ENCODE measurements at regions of chr12 and their contacts with region 1.

Region 1: DNA sequence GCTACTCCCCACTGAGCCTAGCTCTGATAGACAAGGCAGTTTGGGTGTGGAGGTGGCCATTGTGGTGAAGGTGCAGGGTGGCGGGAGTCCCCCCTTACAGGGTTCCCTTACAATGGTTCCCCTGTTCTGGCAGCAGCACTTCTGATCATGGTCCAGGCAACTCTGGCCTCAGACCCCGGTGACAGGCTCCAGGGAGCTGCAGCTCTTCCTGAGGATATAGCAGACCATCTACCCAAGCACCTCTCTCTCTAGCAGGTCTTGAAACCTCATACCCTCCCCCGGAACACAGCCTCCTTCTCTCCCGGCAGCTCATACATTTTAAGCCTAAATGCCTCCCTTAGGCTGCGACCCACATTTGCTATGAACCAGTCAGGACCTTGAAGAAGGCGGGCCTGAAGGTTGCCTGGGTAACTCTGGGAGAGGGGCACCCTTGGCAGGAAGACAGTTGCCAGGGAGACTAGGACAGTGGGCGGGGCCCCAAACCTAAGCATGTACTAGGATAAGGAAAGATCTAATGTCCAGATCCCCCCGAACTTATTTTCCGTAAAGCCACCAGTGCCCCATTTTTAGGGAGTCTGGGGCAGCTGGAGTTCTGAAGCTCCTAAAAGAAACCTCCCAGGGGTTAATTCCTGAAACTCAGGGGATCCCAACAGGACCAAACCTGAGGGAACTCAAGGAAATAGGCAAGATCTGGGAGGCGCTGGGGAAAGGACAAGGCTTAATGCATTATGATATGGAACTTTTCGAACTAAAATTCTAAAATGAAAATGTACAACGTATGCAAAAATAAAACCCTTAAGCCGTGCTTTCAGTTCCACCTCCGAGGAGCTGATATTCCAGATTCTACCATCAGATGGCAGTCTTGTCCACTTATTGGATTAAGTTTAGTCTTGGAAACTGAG is 4.5 kb upstream of the GDF11 start:
- DNase-seq: peak; percentile 82
- ATAC-seq: peak; percentile 79
- H3K4me3 ChIP-seq: peak overlapping the region; percentile 63 to 64
- H3K27ac ChIP-seq: peak overlapping the region; percentile 46
- H3K4me1 ChIP-seq: peaks cover 14 to 44% of the 10 kb centered on the region in 2 experiments
- H3K27me3 ChIP-seq: no peaks in the 10 kb centered on the region
- CTCF ChIP-seq: peak; percentile 65 to 93 (median 87)
- POLR2A ChIP-seq: peak; percentile 37
- RAD21 ChIP-seq: peak; percentile 95

Region 2: GRCh38 chr12:55659486-55660385 is 78.6 kb before region 1 on chr12:
- CTCF ChIA-PET with region 1: interaction called, 40 read pairs
- POLR2A ChIA-PET with region 1: no interaction called
- RAD21 ChIA-PET with region 1: interaction called, 3 to 4 read pairs
- intact Hi-C with region 1: loop called (anchors 1 kb)
- DNase-seq: no peak
- ATAC-seq: peak; percentile 65; the same call in 1 of the 2 replicates
- H3K4me3 ChIP-seq: no peak overlapping the region
- H3K27ac ChIP-seq: no peak overlapping the region
- H3K4me1 ChIP-seq: no peaks in the 10 kb centered on the region
- H3K27me3 ChIP-seq: no peaks in the 10 kb centered on the region
- CTCF ChIP-seq: peak; percentile 62 to 74 (median 64); a peak in 5 of 6 replicates
- POLR2A ChIP-seq: no peak
- RAD21 ChIP-seq: peak; percentile 84

Region 3: DNA sequence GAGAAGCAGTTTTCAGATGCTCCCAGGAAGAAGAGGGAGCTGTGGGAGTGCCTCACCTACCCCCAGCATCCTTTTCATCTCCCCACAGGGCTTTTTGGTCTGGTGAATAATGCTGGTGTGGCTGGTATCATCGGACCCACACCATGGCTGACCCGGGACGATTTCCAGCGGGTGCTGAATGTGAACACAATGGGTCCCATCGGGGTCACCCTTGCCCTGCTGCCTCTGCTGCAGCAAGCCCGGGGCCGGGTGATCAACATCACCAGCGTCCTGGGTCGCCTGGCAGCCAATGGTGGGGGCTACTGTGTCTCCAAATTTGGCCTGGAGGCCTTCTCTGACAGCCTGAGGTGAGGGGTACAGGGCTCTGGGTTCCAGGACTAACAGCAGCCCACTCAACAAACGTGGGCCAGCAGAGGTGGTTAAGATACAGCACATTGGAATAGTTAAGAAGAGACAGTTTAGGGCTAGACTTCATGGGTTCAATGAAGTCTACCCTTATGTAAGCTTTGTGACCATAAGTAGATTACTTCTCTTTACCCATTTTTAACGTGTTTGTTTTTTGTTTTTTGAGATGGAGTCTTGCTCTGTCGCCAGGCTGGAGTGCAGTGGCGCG is 16.7 kb before region 1 on chr12:
- CTCF ChIA-PET with region 1: interaction called, 49 read pairs
- POLR2A ChIA-PET with region 1: interaction called, 9 read pairs
- RAD21 ChIA-PET with region 1: interaction called, 4 to 11 read pairs
- intact Hi-C with region 1: no loop called
- DNase-seq: no peak
- ATAC-seq: no peak
- H3K4me3 ChIP-seq: no peak overlapping the region
- H3K27ac ChIP-seq: peak overlapping the region; percentile 30
- H3K4me1 ChIP-seq: peaks cover 29 to 65% of the 10 kb centered on the region in 2 experiments
- H3K27me3 ChIP-seq: no peaks in the 10 kb centered on the region
- CTCF ChIP-seq: no peak
- POLR2A ChIP-seq: no peak
- RAD21 ChIP-seq: no peak

Region 4: DNA sequence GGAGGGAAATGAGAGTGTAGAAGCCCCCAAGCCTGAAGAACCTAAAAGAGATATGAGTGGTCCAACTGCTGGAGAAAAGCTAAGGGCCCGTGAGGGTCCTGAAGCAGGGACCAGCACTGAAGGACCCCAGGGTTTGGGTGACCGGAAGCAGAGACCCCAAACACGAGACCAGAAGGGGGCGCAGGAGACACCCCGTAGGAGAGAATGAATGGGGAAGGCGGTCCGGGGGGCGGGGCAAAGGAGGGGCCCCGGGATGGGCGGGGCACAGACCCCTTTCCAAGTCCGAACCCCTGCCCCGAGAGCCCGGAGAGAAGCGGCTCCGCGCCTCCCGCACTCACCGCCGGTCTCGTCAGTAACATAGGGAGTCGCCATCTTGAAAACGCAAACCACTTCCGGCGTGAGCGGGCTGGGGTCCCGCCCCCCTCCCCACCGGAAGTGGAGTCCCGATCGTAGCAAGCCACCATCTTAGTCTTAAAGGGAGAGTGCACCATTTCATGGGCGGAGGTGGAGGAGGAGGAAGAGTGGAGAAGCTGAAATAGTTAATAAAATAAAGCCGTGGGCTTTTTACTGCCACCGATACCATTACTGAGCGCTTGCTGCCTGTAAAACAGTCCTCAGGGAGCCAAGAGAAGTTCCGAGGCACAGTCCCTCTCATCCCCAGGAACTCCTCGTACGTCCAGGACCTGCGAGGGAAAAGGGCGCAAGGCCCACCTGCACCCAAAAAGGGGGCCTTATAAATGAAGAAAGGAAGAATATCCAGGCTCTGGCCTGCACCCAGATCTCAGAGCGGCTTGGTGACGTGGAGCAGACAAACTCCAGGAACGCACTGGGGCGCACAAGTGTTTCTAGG is 188.6 kb after region 1 on chr12:
- CTCF ChIA-PET with region 1: interaction called, 10 read pairs
- POLR2A ChIA-PET with region 1: no interaction called
- RAD21 ChIA-PET with region 1: no interaction called
- intact Hi-C with region 1: loop called (anchors 1 kb)
- DNase-seq: peak; percentile 89
- ATAC-seq: peak; percentile 62
- H3K4me3 ChIP-seq: peak overlapping the region; percentile 80 to 99
- H3K27ac ChIP-seq: peak overlapping the region; percentile 97
- H3K4me1 ChIP-seq: peaks cover 23 to 61% of the 10 kb centered on the region in 2 experiments
- H3K27me3 ChIP-seq: no peaks in the 10 kb centered on the region
- CTCF ChIP-seq: peak in 2 of 3 experiments; percentile 69 to 88; a peak in 4 of 6 replicates
- POLR2A ChIP-seq: peak; percentile 20
- RAD21 ChIP-seq: no peak

Region 5: DNA sequence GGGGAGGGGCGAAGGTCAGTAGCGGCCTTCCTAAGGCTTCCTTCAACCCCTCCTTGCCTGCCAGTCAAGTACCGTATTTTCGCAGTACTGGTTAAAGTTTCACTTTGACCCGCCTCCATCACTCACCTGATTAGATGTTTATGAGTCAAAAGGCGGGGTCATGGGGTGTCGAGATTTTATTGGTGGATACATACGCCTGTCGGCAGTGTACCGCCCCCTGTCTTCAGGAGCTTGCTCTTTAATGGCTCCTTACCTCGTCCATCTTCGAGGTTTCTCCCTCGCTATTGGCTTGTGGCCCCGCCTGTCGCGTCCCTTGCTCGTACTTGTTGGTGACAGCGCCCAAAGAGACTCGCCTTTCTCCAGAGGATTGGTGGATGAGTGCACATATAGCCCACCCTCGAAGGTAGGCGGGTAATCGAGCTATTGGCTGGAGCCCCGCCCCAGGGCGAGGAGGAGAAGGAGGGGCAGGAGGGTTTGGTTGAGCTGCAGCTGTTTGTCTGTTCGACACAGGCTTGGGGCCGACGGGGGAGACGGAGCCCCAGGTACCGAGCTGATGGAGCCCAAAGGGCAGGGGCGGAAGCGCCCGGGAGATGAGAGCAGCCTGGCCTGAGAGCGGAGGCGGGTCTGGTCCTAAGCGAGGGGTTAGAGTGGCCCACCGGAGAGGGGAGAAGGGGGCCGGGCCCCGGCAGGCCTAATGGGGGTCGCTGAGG is 235.4 kb after region 1 on chr12 and contains the start of gene RAB5B:
- CTCF ChIA-PET with region 1: interaction called, 11 read pairs
- POLR2A ChIA-PET with region 1: interaction called, 4 read pairs
- RAD21 ChIA-PET with region 1: interaction called in 1 of 2 experiments, 3 read pairs
- intact Hi-C with region 1: no loop called
- DNase-seq: peak; percentile 100
- ATAC-seq: peak; percentile 94
- H3K4me3 ChIP-seq: peak within 1 kb of the TSS; percentile 78 to 94
- H3K27ac ChIP-seq: peak within 1 kb of the TSS; percentile 80
- H3K4me1 ChIP-seq: peaks cover 17 to 32% of the 10 kb centered on the region in 2 experiments
- H3K27me3 ChIP-seq: no peaks in the 10 kb centered on the region
- CTCF ChIP-seq: no peak
- POLR2A ChIP-seq: peak; percentile 61
- RAD21 ChIP-seq: no peak
- total RNA-seq, gene RAB5B: 44.5 TPM

Region 6: DNA sequence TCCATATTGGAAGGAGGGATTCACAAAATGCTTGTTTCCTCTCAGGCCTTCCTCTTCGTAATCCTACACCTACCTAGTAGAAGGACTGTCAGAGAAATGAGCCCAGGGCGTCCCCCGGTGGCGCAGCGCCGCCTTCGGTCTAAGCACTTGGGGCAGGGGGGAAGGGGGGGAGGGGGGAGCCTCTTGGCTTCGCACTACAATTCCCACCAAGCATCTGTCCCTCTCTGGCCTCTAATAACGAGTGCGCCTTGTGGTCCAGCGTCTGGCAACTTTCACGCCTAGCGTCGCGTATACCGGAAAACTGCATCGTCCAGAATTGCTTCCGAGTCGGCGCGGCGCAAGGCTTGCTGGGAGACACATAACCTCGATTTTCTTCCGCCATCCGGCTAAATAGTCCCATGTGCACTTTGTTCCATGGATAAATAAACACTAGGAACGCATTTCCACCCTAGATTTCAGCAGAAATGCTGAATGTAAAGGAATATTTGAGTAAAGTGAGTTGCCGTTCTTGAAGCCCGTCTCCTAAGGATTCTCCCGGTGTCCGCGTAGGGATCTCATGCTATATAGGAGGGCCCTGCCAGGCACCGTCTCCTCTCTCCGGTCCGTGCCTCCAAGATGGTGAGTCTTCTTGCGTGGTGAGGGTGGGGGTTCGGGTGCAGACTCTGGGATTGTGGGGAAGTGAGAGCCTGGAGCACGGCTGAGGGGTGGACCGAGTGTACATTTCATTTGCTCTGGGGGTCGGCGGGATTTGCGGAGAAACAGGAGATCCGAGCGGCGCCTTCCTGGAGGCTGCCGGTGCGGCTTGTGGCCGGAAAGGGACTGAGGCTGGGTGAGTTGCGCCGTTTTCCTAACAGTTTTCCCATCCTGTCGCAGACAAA is 303.4 kb after region 1 on chr12 and contains the start of gene RPS26:
- CTCF ChIA-PET with region 1: interaction called, 13 read pairs
- POLR2A ChIA-PET with region 1: no interaction called
- RAD21 ChIA-PET with region 1: interaction called in 1 of 2 experiments, 3 read pairs
- intact Hi-C with region 1: loop called (anchors 1 kb)
- DNase-seq: peak; percentile 100
- ATAC-seq: peak; percentile 88
- H3K4me3 ChIP-seq: peak within 1 kb of the TSS; percentile 90 to 99
- H3K27ac ChIP-seq: peak within 1 kb of the TSS; percentile 90
- H3K4me1 ChIP-seq: peaks cover 16 to 39% of the 10 kb centered on the region in 2 experiments
- H3K27me3 ChIP-seq: no peaks in the 10 kb centered on the region
- CTCF ChIP-seq: peak; percentile 39 to 75 (median 42)
- POLR2A ChIP-seq: peak; percentile 99
- RAD21 ChIP-seq: peak; percentile 81
- total RNA-seq, gene RPS26: 70.2 TPM